ENCODE measurements at regions of chr19 and their contacts with region 1.

Region 1: DNA sequence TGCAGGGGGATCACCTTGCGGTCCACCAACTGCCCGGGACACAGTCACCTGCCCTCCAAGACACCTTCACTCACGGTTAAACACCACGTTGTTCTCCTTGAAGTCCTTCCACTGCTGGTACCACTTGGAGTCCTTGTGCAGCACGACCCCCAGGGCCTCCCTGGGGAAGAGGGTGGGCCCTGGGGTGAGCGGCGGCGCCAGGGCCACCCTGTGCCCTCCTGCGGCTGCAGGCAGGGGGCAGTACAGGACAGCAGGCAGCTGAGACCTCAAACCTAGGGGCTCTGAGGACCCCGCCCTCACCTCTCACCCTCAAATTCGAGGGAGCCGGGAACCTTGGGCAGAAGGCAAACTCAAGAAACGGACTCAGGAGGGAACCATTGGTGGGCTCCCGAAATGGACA is 7.5 kb upstream of the CTXN1 start:
- DNase-seq: no peak
- H3K4me3 ChIP-seq: no peak overlapping the region
- H3K27ac ChIP-seq: peak overlapping the region in 1 of 4 donors; percentile 28
- H3K4me1 ChIP-seq: peaks cover 7 to 14% (median 10%) of the 10 kb centered on the region in 4 donors
- H3K27me3 ChIP-seq: no peaks in the 10 kb centered on the region
- CTCF ChIP-seq: peak in 1 of 5 experiments; percentile 8
- EP300 ChIP-seq: no peak
- POLR2A ChIP-seq: no peak

Region 2: DNA sequence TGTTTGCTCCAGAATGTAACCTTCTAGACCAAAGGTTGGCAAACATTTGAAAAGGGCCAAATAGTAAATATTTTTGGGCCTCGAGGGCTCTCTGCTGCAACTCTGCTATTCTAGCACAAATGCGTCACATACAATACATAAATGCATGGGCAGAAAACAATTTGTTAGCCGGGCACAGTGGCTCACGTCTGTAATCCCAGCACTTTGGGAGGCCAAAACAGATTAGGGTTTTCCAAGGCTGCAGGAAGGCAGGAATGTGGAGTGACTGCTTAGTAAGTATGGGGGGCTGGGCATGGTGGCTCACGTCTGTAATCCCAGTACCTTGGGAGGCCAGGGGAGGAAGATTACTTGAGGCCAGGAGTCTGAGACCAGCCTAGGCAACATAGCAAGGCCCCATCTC is 125.3 kb before region 1 on chr19:
- in situ Hi-C with region 1: no loop called
- intact Hi-C with region 1: no loop called
- DNase-seq: no peak
- H3K4me3 ChIP-seq: no peak overlapping the region
- H3K27ac ChIP-seq: no peak overlapping the region
- H3K4me1 ChIP-seq: peaks cover 0 to 8% (median 5%) of the 10 kb centered on the region in 4 donors
- H3K27me3 ChIP-seq: peaks cover 11% of the 10 kb centered on the region
- CTCF ChIP-seq: no peak
- EP300 ChIP-seq: no peak
- POLR2A ChIP-seq: no peak

Region 3: DNA sequence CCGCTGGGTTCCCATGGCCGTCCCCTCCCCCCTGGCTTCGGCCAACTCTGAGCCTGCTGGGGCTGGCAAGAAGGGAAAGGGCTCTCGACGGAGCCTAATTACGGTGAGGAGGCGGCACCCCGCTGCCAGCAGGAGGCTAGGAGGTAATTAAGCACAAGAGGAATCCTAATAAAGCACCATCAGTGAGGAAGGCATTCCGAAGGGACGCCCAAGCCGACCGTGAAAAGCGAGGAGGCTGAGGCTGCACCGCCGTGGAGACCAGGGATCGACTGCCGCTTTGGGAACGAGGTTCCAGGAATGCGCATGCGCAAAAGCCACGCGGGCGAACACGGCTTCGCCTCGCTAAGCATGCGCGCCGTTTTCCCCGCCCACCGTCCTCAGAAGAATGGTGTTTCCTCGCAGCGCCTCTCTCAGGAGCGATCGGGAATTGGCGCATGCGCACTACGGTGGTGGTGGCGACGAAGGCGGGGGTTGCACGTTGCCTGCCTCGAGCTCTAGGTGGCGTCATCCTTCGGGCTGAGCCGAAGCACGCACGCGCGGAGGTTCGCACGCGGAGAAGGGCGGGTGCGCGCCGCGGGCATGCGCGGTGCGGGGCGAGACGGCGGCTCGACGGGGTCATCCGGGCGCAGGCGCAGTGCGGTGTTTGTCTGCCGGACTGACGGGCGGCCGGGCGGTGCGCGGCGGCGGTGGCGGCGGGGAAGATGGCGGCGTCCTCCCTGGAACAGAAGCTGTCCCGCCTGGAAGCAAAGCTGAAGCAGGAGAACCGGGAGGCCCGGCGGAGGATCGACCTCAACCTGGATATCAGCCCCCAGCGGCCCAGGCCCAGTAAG is 30.0 kb before region 1 on chr19 and contains the start of gene MAP2K7:
- in situ Hi-C with region 1: no loop called
- intact Hi-C with region 1: no loop called
- DNase-seq: peak; percentile 100
- H3K4me3 ChIP-seq: peak within 1 kb of the TSS; percentile 49 to 92 (median 68)
- H3K27ac ChIP-seq: peak within 1 kb of the TSS; percentile 86 to 91 (median 88)
- H3K4me1 ChIP-seq: peaks cover 18 to 32% (median 26%) of the 10 kb centered on the region in 4 donors
- H3K27me3 ChIP-seq: no peaks in the 10 kb centered on the region
- CTCF ChIP-seq: peak in 4 of 5 experiments; percentile 36 to 62 (median 48)
- EP300 ChIP-seq: no peak
- POLR2A ChIP-seq: peak; percentile 74
- total RNA-seq, gene MAP2K7: 11.9 to 125 (median 20.9) TPM

Region 4: DNA sequence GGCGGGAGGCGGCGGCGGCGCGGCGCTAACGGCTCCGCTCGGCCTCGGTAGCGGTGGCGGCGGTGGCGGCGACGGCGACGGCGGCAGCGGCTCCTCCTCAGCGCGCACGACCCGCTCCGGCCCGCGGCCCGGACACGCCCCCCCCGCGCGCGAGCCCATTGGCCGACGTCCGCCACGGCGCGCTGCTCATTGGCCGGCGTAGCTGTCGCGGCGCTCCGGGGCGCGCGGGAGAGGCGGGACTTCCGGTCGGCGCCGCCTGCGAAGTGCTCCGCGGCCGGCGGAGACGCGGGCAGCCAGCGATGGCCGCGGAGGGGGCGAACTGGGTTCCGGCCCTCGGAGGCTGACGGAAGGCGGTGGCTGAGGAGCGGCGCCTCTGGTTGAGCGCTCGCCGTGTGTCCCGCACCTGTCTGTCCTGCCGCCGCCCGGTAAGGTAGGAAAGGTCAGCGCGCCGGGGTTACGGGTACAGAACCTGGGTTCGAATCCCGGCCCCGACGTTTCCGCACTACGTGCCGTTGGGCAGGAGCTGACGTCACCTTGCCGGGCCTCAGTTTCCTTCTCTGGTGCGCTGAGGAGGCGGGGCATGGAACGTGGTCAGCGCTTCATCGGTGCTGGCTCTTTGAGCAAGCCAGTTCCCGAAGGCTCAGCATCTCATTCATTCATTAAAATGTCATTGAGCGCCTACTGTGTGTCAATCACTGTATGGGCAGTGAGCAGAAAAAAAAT is 72.3 kb after region 1 on chr19 and contains the start of gene ELAVL1:
- in situ Hi-C with region 1: no loop called
- intact Hi-C with region 1: loop called (anchors 10 kb)
- DNase-seq: peak; percentile 92
- H3K4me3 ChIP-seq: peak within 1 kb of the TSS; percentile 76 to 98 (median 90)
- H3K27ac ChIP-seq: peak within 1 kb of the TSS; percentile 79 to 93 (median 92)
- H3K4me1 ChIP-seq: peaks cover 27 to 45% (median 32%) of the 10 kb centered on the region in 4 donors
- H3K27me3 ChIP-seq: no peaks in the 10 kb centered on the region
- CTCF ChIP-seq: no peak
- EP300 ChIP-seq: no peak
- POLR2A ChIP-seq: no peak
- total RNA-seq, gene ELAVL1: 11.9 to 101 (median 22.4) TPM

Measured in transverse colon (tissue), 4 donors.